ENCODE measurements at regions of chr16 and their contacts with region 1.

Region 1: DNA sequence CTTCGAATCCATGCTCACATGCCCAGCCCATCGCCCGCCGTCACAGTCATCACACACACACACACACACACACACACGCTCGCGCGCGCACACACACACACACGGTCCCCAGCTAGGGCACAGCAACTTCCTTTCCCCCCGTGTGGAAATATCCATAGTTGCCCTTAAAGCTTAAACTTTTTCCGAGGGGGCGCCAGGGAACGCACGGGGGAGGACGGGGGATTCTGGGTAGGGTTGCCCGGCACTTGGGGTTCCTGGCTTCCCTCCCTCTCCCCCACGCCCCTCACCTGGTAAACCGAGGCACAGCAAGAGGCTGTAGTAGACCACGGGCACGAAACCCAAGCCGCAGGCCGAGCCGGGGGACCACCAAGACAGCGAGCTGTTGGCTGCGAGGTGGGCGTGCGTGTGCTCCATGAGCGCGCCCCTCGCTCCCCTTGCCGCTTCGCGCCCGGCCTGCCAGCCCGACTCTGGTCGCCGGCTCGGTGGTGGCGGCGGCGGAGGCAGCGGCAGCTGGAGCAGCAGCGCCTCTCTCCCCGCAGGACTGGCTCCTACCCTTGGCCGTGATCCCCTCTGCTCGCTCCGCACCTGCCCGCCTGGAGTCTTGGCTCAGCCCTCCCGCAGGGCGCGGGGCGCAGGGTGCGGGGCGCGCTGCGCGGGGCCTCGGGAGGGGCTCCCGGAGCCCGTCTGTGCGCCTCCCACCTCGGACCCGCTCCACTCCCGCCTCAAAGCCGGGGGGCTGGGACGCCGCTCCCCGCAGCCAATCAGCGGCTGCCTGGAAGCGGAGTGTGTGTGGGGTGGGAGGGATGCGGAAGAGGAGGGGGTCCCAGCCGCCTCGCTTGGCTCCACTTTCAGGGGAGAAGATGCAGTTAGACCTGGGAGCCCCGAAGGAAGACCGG is at the start of gene GPR139:
- DNase-seq: no peak
- H3K4me3 ChIP-seq: no peak within 1 kb of the TSS
- H3K27ac ChIP-seq: no peak within 1 kb of the TSS
- H3K4me1 ChIP-seq: no peaks in the 10 kb centered on the region
- H3K27me3 ChIP-seq: peaks cover 28% of the 10 kb centered on the region
- CTCF ChIP-seq: no peak
- polyA plus RNA-seq, gene GPR139: not detected in 3 replicates

Region 2: GRCh38 chr16:20029611-20030010 is 43.8 kb before region 1 on chr16:
- dilution Hi-C with region 1: loop called (anchors 5 kb)
- DNase-seq: no peak
- H3K4me3 ChIP-seq: no peak overlapping the region
- H3K27ac ChIP-seq: no peak overlapping the region
- H3K4me1 ChIP-seq: no peaks in the 10 kb centered on the region
- H3K27me3 ChIP-seq: no peaks in the 10 kb centered on the region
- CTCF ChIP-seq: no peak

Region 3: DNA sequence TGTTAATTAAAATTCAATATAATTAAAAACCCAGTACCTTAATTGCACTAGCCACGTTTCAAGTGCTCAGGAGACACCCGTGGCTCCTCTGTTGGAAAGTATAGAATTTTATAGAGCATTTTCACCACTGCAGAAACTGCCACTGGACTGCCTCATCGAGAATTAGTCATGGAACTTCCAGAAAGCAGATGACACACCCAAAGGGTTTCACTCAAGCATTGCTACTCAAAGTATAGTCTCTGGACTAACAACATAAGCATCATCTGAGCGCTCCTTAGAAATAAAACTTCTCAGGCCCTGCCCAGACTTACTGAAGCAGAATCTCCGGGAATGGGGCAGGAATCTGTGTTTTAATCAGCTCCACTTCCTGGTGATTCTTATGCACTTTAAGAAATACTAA is 63.7 kb after region 1 on chr16:
- dilution Hi-C with region 1: loop called (anchors 10 kb)
- DNase-seq: no peak
- H3K4me3 ChIP-seq: no peak overlapping the region
- H3K27ac ChIP-seq: no peak overlapping the region
- H3K4me1 ChIP-seq: no peaks in the 10 kb centered on the region
- H3K27me3 ChIP-seq: no peaks in the 10 kb centered on the region
- CTCF ChIP-seq: no peak

Measured in keratinocyte (primary cell).